ENCODE measurements at regions of chr12 and their contacts with region 1.

Region 1: GRCh38 chr12:12786716-12787601 is 1.5 kb downstream of the APOLD1 start:
- DNase-seq: peak; percentile 15 to 91
- H3K4me3 ChIP-seq: peak overlapping the region; percentile 55 to 74
- H3K27ac ChIP-seq: peak overlapping the region; percentile 84 to 90
- H3K4me1 ChIP-seq: peaks cover 3 to 14% of the 10 kb centered on the region in 2 donors
- H3K27me3 ChIP-seq: no peaks in the 10 kb centered on the region
- CTCF ChIP-seq: peak in 1 of 3 experiments; percentile 42

Region 2: DNA sequence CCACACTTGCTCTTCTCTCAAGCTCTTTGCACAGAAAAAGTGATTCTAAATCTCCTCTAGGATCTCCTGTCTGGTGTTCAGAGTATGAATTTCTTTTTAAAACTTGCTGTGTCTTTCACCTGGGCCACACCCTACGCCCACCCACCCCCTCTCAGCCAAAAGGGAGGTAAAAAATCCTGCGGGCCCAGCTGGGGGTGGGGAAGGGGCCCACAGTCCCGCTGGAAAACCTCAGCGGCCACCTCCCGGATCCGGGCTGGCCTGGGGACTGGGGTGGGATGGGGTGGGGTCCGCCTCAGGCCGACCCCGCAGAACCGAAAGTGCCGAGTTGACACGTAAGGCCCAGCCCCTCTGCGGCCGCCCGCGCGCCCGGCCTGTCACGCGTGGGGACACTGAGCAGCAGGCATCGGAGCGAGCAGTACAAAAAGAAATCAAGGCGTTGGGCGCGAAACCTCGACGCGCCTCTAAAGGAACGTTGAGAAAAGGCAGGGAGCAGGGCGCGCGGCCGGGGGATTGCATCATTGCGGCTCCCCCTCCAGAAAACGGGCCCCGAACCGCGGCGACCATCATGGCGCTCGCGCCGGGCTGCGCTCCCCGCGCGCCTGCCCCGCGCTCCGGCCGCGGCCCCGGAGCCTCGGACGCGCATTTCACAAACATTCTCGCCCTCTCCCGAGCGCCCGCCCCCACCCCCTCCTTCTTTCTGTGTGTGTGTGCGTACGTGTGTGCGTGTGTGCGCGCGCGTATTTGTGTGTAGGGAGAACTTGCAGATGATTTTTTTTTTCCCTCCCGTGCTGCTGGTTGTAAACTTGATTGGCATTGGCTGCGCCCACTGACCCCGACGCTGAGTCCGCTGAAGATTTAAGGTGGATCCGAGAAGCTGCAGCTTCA is 62.1 kb before region 1 on chr12:
- intact Hi-C with region 1: loop called (anchors 5 kb)
- DNase-seq: peak; percentile 88 to 98
- H3K4me3 ChIP-seq: peak overlapping the region; percentile 70 to 75
- H3K27ac ChIP-seq: peak overlapping the region; percentile 96 to 97
- H3K4me1 ChIP-seq: peaks cover 3 to 25% of the 10 kb centered on the region in 2 donors
- H3K27me3 ChIP-seq: no peaks in the 10 kb centered on the region
- CTCF ChIP-seq: peak in 2 of 3 experiments; percentile 7

Region 3: DNA sequence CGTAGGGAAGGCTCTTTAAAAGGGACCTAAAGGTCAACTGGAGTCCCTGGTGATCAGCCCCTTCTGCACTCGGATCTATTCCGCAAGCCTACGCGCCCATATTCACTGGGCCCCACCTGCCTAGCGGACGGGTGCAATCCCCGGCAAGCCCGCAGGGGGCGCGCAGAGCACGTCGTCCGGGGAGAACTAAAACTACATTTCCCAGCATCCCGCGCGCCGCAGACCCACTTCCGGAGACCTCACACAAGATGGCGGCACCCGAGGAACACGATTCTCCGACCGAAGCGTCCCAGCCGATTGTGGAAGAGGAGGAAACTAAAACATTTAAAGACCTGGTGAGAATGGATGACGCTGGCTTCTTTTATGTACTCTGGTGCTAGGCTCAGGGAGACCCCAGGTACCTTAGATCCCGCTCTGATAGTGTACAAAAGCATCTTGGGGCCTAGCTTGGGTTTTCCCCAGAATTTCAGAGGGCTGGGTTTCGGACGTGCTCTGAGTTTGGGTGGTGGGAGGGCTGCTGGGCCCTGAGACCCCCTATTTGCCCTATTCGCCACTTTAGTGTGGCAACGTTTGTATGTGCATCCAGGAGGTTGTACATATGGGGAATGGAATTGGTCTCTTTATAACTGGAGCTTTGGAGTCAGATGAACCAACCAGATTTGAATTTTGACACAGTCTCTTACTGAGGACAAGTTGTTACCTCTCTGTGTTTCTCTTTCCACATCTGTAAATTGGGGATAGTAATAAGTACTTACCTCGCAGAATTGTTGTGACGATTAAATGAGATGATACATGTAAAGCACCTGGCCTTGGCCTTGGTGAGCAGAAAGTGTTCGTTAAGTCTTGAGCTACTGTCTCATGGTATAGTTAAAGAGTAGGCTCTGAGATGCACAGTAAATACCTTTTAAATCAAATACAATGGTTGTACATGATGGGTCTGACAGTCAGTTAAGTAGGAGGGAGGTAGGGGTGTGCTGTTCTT is 26.5 kb after region 1 on chr12 and contains the start of gene DDX47:
- intact Hi-C with region 1: loop called (anchors 1 kb)
- DNase-seq: peak; percentile 79 to 98
- H3K4me3 ChIP-seq: peak within 1 kb of the TSS; percentile 76 to 90
- H3K27ac ChIP-seq: peak within 1 kb of the TSS; percentile 59 to 61
- H3K4me1 ChIP-seq: peaks cover 5 to 10% of the 10 kb centered on the region in 2 donors
- H3K27me3 ChIP-seq: no peaks in the 10 kb centered on the region
- CTCF ChIP-seq: peak; percentile 95 to 98 (median 97)
- total RNA-seq, gene DDX47: 36.4 TPM

Region 4: GRCh38 chr12:12872139-12872881 is 85.4 kb after region 1 on chr12:
- intact Hi-C with region 1: no loop called
- DNase-seq: no peak
- H3K4me3 ChIP-seq: no peak overlapping the region
- H3K27ac ChIP-seq: no peak overlapping the region
- H3K4me1 ChIP-seq: peaks cover 0 to 3% of the 10 kb centered on the region in 2 donors
- H3K27me3 ChIP-seq: no peaks in the 10 kb centered on the region
- CTCF ChIP-seq: no peak

Region 5: GRCh38 chr12:12890815-12891645 is 104.1 kb after region 1 on chr12 and contains the start of gene GPRC5A:
- intact Hi-C with region 1: loop called (anchors 1 kb)
- DNase-seq: peak; percentile 93 to 99
- H3K4me3 ChIP-seq: peak within 1 kb of the TSS; percentile 65 to 70
- H3K27ac ChIP-seq: peak within 1 kb of the TSS; percentile 93 to 94
- H3K4me1 ChIP-seq: peaks cover 0 to 4% of the 10 kb centered on the region in 2 donors
- H3K27me3 ChIP-seq: no peaks in the 10 kb centered on the region
- CTCF ChIP-seq: peak in 2 of 3 experiments; percentile 19 to 35
- total RNA-seq, gene GPRC5A: 23.8 TPM

Region 6: GRCh38 chr12:12916135-12916944 is 129.4 kb after region 1 on chr12:
- intact Hi-C with region 1: loop called (anchors 5 kb)
- DNase-seq: peak; percentile 65 to 95
- H3K4me3 ChIP-seq: no peak overlapping the region
- H3K27ac ChIP-seq: peak overlapping the region; percentile 47 to 64
- H3K4me1 ChIP-seq: peaks cover 0 to 13% of the 10 kb centered on the region in 2 donors
- H3K27me3 ChIP-seq: no peaks in the 10 kb centered on the region
- CTCF ChIP-seq: peak; percentile 93 to 97 (median 96)

Region 7: DNA sequence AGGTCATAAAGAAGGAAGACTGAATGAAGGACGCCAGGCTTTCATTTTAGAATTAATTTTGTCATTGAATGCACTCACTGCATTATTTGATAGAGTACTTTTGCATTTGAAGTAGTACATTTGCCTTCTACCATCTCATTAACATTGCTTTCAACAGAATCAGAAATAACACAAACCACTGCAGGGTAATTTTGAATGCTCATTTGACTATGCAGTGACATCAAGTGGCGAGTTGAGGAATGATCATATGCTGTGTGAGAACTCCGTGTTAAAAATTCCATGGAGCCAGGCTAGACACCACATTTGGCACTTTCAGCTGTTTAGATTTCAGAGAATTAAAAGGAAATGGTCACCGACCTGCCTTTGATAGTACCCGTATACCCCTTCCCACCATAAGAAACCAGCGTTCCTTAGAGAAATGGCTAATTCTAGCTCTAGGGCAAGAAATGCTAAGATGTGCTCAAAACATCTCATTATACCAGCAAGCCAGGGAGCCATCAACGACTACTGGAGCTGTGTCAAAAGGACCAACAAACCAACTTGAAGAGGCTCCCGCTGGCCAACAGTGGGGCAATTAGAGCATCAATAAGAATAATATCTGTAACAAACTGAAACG is 196.6 kb after region 1 on chr12:
- intact Hi-C with region 1: loop called (anchors 5 kb)
- DNase-seq: no peak
- H3K4me3 ChIP-seq: no peak overlapping the region
- H3K27ac ChIP-seq: no peak overlapping the region
- H3K4me1 ChIP-seq: peaks cover 0 to 18% of the 10 kb centered on the region in 2 donors
- H3K27me3 ChIP-seq: no peaks in the 10 kb centered on the region
- CTCF ChIP-seq: peak; percentile 49 to 72 (median 56)

Region 8: GRCh38 chr12:13211859-13212664 is 425.1 kb after region 1 on chr12:
- intact Hi-C with region 1: loop called (anchors 10 kb)
- DNase-seq: peak in 1 of 2 donors; percentile 84
- H3K4me3 ChIP-seq: no peak overlapping the region
- H3K27ac ChIP-seq: no peak overlapping the region
- H3K4me1 ChIP-seq: peaks cover 0 to 10% of the 10 kb centered on the region in 2 donors
- H3K27me3 ChIP-seq: no peaks in the 10 kb centered on the region
- CTCF ChIP-seq: peak; percentile 71 to 86 (median 78)